IMR-90 (cell line): ENCODE measurements at regions of chr1 and their contacts with region 1.

Region 1: GRCh38 chr1:185670187-185670627 is 64.0 kb upstream of the HMCN1 start:
- DNase-seq: peak; percentile 55
- ATAC-seq: peak; percentile 83
- H3K4me3 ChIP-seq: no peak overlapping the region
- H3K27ac ChIP-seq: no peak overlapping the region
- H3K4me1 ChIP-seq: no peaks in the 10 kb centered on the region
- H3K27me3 ChIP-seq: no peaks in the 10 kb centered on the region
- CTCF ChIP-seq: peak; percentile 72
- POLR2A ChIP-seq: no peak
- RAD21 ChIP-seq: peak; percentile 80

Region 2: DNA sequence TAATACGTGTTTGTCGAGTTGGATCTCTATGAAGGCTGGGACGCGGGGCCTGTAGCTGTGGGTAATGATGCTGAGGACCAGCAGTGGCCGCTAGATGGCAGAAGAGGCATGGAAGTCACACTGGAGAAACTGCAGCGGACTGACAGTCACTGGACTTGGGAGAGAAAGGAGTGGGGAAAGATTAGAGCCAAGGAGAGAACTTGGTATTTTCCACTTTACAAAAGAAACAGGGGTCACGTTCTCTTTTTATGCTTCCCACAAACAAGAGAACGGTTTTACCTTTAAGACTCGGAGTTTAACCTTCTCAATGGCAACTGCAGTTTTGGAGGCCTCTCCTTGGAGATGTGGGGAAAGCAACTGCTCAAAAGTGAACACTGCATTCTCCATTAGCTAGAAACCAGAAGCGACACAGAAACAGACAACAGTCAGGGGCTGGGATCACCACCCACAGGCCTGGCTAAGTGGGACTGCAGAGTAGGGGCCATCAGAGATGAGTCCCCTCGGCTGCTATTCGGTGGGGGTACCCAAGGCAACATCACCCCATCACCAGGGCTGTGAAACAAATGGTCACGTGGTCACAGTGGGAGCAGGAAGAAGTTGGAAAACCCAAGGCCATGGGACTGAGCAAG is 864.4 kb before region 1 on chr1:
- CTCF ChIA-PET with region 1: no interaction called
- POLR2A ChIA-PET with region 1: no interaction called
- dilution Hi-C with region 1: no loop called
- in situ Hi-C with region 1: loop called (anchors 25 kb)
- intact Hi-C with region 1: loop called (anchors 10 kb)
- DNase-seq: peak; percentile 83
- ATAC-seq: peak; percentile 89
- H3K4me3 ChIP-seq: no peak overlapping the region
- H3K27ac ChIP-seq: no peak overlapping the region
- H3K4me1 ChIP-seq: peaks cover 7% of the 10 kb centered on the region
- H3K27me3 ChIP-seq: no peaks in the 10 kb centered on the region
- CTCF ChIP-seq: peak; percentile 96
- POLR2A ChIP-seq: 0 out of 2 replicates have a peak, but pooled peaks have one; percentile 50
- RAD21 ChIP-seq: peak; percentile 99

Region 3: DNA sequence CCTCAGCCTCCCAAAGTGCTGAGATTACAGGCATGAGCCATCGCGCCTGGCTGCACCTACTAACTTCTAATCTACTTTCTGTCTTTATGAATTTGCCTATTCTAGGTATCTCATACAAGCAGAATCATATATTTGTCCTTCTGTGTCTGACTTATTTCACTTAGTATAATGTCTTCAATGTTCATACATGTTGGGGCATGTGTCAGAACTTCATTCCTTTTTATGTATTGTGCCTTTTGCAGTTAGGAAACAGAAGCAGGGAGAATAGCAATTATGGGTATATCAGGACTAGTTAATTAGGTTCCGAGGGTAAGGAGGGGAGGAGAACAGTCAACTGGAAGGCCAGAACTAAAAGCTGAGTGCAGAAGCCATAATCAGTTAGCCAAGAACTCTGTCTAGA is 677.9 kb before region 1 on chr1:
- CTCF ChIA-PET with region 1: no interaction called
- POLR2A ChIA-PET with region 1: no interaction called
- dilution Hi-C with region 1: no loop called
- in situ Hi-C with region 1: loop called (anchors 10 kb)
- intact Hi-C with region 1: loop called (anchors 5 kb)
- DNase-seq: no peak
- ATAC-seq: no peak
- H3K4me3 ChIP-seq: no peak overlapping the region
- H3K27ac ChIP-seq: no peak overlapping the region
- H3K4me1 ChIP-seq: no peaks in the 10 kb centered on the region
- H3K27me3 ChIP-seq: no peaks in the 10 kb centered on the region; the same call in 1 of the 2 replicates
- CTCF ChIP-seq: no peak
- POLR2A ChIP-seq: no peak
- RAD21 ChIP-seq: no peak

Region 4: DNA sequence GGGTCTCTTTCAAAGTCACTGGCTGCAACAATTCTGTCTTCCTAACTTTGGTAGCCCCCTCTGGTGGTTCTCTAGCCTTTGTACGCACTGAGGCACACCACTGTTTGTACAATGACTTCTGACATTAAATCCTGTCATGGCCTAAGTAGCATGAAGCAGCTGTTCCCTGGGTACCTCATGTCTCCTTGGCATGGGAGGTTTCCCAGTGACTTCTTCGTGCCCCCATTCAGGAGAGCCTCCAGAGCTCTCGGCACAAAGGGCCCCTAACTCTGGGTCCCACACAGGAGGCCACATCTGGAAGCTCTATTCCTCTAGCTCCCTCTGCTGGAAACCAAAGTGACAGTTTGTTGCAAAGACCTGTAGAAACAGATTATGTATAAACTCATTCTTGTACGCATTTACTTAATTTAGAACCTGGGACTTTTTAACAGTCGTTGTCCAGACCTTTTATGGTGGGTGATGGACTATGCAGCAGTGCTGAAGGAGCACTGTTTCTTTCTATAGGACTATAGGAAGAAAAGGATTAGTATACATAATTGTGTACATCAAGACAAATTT is 499.8 kb before region 1 on chr1:
- CTCF ChIA-PET with region 1: interaction called, 5 read pairs
- POLR2A ChIA-PET with region 1: no interaction called
- dilution Hi-C with region 1: no loop called
- in situ Hi-C with region 1: no loop called
- intact Hi-C with region 1: loop called (anchors 5 kb)
- DNase-seq: peak; percentile 67
- ATAC-seq: peak; percentile 90
- H3K4me3 ChIP-seq: no peak overlapping the region
- H3K27ac ChIP-seq: no peak overlapping the region
- H3K4me1 ChIP-seq: no peaks in the 10 kb centered on the region; the same call in 1 of the 2 replicates
- H3K27me3 ChIP-seq: no peaks in the 10 kb centered on the region
- CTCF ChIP-seq: peak; percentile 56
- POLR2A ChIP-seq: no peak
- RAD21 ChIP-seq: peak; percentile 68

Region 5: GRCh38 chr1:185317034-185317885 is 352.9 kb before region 1 on chr1 and contains the start of gene IVNS1ABP:
- CTCF ChIA-PET with region 1: interaction called, 6 read pairs
- POLR2A ChIA-PET with region 1: no interaction called
- dilution Hi-C with region 1: no loop called
- in situ Hi-C with region 1: no loop called
- intact Hi-C with region 1: loop called (anchors 1 kb)
- DNase-seq: peak; percentile 87
- ATAC-seq: peak; percentile 84
- H3K4me3 ChIP-seq: peak within 1 kb of the TSS; percentile 89
- H3K27ac ChIP-seq: peak within 1 kb of the TSS; percentile 94
- H3K4me1 ChIP-seq: peaks cover 5% of the 10 kb centered on the region
- H3K27me3 ChIP-seq: no peaks in the 10 kb centered on the region
- CTCF ChIP-seq: no peak
- POLR2A ChIP-seq: peak; percentile 95
- RAD21 ChIP-seq: 0 out of 2 replicates have a peak, but pooled peaks have one; percentile 15
- total RNA-seq, gene IVNS1ABP: 26.7 and 41.9 TPM in 2 replicates

Region 6: DNA sequence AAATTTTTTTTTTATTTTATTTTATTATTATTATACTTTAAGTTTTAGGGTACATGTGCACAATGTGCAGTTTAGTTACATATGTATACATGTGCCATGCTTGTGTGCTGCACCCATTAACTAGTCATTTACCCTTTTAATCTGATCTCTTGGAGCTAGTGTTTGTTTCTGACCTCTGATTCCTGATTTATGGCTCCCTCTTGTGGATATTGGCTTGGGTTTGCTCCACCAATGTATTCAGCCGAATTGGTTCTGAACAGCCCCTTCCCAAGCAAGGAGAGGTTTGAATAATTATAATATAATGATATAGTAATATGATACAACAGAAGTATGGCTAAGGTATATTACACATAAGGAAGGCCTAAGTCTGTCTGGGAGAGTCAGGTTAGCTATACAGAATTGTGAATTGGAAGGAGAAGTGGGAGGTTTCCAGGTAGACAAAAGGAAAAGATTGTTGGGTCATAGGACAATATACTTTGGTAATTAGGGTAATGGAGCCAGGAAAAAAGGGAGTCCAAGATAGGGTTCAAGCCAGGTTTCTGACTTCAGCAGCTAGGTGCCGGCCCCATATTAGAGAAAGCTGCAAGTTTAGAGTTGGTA is 10.9 kb after region 1 on chr1:
- CTCF ChIA-PET with region 1: interaction called, 14 read pairs
- POLR2A ChIA-PET with region 1: no interaction called
- dilution Hi-C with region 1: no loop called
- in situ Hi-C with region 1: no loop called
- intact Hi-C with region 1: no loop called
- DNase-seq: peak; percentile 44
- ATAC-seq: peak; percentile 71
- H3K4me3 ChIP-seq: no peak overlapping the region
- H3K27ac ChIP-seq: no peak overlapping the region
- H3K4me1 ChIP-seq: no peaks in the 10 kb centered on the region
- H3K27me3 ChIP-seq: no peaks in the 10 kb centered on the region
- CTCF ChIP-seq: peak; percentile 67
- POLR2A ChIP-seq: no peak
- RAD21 ChIP-seq: peak; percentile 67

Region 7: GRCh38 chr1:185720633-185721272 is 50.5 kb after region 1 on chr1:
- CTCF ChIA-PET with region 1: no interaction called
- POLR2A ChIA-PET with region 1: no interaction called
- dilution Hi-C with region 1: no loop called
- in situ Hi-C with region 1: no loop called
- intact Hi-C with region 1: no loop called
- DNase-seq: peak; percentile 64
- ATAC-seq: peak; percentile 49
- H3K4me3 ChIP-seq: no peak overlapping the region
- H3K27ac ChIP-seq: no peak overlapping the region
- H3K4me1 ChIP-seq: peaks cover 4% of the 10 kb centered on the region
- H3K27me3 ChIP-seq: no peaks in the 10 kb centered on the region
- CTCF ChIP-seq: peak; percentile 57
- POLR2A ChIP-seq: no peak
- RAD21 ChIP-seq: peak; percentile 51